ENCODE measurements at regions of chr12 and their contacts with region 1.

Region 1: DNA sequence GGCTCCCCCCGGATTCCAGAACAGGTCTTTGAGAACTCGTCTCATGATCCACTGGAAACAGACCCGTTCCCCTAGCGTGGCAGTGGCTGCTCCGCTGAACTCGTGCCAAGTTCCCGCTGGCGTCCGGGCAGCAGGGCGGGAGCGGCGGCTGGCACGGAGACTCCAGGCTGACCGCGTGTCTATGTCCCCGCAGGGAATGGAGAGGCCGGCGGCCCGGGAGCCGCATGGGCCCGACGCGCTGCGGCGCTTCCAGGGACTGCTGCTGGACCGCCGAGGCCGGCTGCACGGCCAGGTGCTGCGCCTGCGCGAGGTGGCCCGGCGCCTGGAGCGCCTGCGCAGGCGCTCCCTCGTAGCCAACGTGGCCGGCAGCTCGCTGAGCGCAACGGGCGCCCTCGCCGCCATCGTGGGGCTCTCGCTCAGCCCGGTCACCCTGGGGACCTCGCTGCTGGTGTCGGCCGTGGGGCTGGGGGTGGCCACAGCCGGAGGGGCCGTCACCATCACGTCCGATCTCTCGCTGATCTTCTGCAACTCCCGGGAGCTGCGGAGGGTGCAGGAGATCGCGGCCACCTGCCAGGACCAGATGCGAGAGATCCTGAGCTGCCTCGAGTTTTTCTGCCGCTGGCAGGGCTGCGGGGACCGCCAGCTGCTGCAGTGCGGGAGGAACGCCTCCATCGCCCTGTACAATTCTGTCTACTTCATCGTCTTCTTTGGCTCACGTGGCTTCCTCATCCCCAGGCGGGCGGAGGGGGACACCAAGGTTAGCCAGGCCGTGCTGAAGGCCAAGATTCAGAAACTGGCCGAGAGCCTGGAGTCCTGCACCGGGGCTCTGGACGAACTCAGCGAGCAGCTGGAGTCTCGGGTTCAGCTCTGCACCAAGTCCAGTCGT is 1.5 kb downstream of the APOLD1 start:
- DNase-seq: peak; percentile 73
- ATAC-seq: peak; percentile 92
- H3K4me3 Mint-ChIP-seq: peak overlapping the region; percentile 87
- H3K27ac Mint-ChIP-seq: peak overlapping the region; percentile 86
- H3K4me1 Mint-ChIP-seq: peaks cover 23% of the 10 kb centered on the region
- H3K27me3 Mint-ChIP-seq: no peaks in the 10 kb centered on the region
- CTCF ChIP-seq: no peak

Region 2: DNA sequence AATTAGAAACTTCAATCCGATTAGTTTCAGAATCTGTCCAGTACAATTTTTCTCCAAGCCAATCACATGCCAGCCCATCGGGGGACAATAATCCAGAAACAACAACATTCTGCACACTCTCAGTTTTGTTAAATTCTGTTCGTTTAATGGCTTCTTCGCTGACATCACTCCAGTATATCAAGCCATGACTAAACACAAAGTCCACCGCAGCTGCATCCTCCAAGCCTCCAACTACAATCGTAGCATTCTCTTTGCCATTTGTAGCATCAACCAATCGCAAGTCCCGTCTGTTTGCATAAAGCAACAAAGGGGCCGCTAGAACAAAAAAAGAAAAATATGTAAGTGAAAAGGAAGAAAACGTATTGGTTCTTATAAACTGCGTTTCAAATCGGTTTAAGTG is 542.6 kb before region 1 on chr12:
- CTCF ChIA-PET with region 1: no interaction called
- POLR2A ChIA-PET with region 1: no interaction called
- intact Hi-C with region 1: no loop called
- DNase-seq: no peak
- ATAC-seq: no peak
- H3K4me3 Mint-ChIP-seq: no peak overlapping the region
- H3K27ac Mint-ChIP-seq: no peak overlapping the region
- H3K4me1 Mint-ChIP-seq: no peaks in the 10 kb centered on the region
- H3K27me3 Mint-ChIP-seq: no peaks in the 10 kb centered on the region
- CTCF ChIP-seq: no peak

Region 3: GRCh38 chr12:12376646-12377448 is 410.1 kb before region 1 on chr12:
- CTCF ChIA-PET with region 1: interaction called, 3 read pairs
- POLR2A ChIA-PET with region 1: no interaction called
- intact Hi-C with region 1: loop called (anchors 2 kb)
- DNase-seq: no peak
- ATAC-seq: peak; percentile 83
- H3K4me3 Mint-ChIP-seq: no peak overlapping the region
- H3K27ac Mint-ChIP-seq: no peak overlapping the region
- H3K4me1 Mint-ChIP-seq: peaks cover 19% of the 10 kb centered on the region
- H3K27me3 Mint-ChIP-seq: no peaks in the 10 kb centered on the region
- CTCF ChIP-seq: no peak

Region 4: GRCh38 chr12:12803186-12803585 is 16.2 kb after region 1 on chr12:
- CTCF ChIA-PET with region 1: interaction called, 30 read pairs
- POLR2A ChIA-PET with region 1: interaction called, 20 read pairs
- intact Hi-C with region 1: loop called (anchors 1 kb)
- DNase-seq: no peak
- ATAC-seq: peak; percentile 70
- H3K4me3 Mint-ChIP-seq: peak overlapping the region; percentile 12
- H3K27ac Mint-ChIP-seq: peak overlapping the region; percentile 6
- H3K4me1 Mint-ChIP-seq: peaks cover 65% of the 10 kb centered on the region
- H3K27me3 Mint-ChIP-seq: no peaks in the 10 kb centered on the region
- CTCF ChIP-seq: no peak

Region 5: DNA sequence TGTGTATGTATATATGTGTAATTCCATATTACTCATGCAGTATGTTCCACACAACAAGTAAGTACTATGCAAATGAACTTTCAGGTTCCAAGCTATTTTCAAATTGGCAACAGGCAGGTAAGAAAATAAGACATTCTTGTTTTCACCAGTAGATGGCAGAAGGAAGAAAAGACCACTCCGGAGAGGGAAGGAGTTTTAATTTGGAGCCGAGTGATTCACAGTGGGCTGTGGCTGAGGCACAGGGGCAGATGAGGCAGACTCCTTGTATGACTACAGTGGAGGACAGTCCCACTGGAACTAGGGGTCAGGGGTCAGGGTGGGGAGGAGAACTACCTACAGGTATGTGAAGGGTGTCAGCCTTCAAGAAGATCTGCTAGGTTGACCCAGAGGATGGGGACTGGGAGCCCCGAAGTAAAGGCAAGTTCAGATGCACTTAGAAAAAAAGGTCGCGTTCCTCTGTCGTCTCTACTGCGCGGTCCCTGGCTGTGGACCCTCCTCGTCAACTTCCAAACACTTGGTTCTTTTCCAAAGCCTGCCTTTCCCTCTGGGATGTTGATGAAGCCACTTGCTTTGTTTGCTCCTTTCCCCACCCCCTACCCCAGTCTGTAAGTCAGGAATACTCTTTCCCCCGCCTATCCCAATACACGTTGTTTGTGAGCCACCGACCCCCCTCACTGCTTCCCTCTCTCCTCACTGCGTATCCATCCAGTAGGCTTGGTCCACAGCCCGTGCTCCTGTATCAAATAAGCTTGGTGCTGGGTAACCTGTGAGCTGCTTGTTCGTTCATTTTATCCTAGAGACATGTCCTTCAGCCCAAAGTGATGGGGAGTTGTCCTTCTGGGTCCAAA is 50.3 kb after region 1 on chr12:
- CTCF ChIA-PET with region 1: interaction called, 14 read pairs
- POLR2A ChIA-PET with region 1: no interaction called
- intact Hi-C with region 1: no loop called
- DNase-seq: no peak
- ATAC-seq: peak; percentile 65
- H3K4me3 Mint-ChIP-seq: no peak overlapping the region
- H3K27ac Mint-ChIP-seq: no peak overlapping the region
- H3K4me1 Mint-ChIP-seq: peaks cover 4% of the 10 kb centered on the region
- H3K27me3 Mint-ChIP-seq: no peaks in the 10 kb centered on the region
- CTCF ChIP-seq: no peak

Region 6: DNA sequence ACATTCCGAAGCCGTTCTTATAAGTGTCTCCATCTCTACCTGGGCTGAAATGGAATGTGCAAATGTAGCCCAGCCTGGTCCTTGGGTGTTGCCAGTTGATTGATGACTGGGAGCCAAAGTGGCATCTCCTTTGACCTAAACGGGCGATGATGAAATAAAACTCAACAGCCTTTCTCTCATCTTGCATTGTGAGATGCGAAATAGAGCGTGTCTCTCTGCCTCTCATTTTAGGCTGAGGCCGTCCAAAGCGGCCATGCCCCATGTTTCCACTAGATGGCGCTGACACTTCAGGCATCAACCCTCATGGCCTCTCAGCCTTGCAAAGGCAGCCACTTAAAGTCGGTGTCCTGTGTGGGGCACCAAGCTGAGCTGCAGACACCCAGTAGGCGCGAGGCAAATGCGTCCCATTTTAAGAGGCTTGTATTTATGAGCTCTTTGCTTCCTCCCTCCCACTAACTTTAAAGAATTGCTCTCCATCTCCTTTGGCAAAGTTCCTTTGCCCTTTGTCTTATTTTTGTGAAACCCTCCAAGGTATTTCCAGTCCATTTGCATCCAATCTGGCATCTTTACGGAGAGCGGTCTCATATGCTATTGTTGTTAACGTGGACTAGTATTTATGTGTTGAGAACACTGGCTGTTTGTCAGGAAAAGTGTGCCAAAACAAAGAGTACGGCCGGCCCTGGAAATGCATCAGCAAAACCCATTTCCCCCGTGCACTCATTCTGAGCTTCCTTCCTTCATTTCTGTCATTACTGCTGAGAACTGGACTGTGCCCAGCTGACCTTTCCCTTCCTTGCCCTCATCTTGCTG is 129.4 kb after region 1 on chr12:
- CTCF ChIA-PET with region 1: interaction called, 13 read pairs
- POLR2A ChIA-PET with region 1: no interaction called
- intact Hi-C with region 1: loop called (anchors 1 kb)
- DNase-seq: peak; percentile 73
- ATAC-seq: peak; percentile 99
- H3K4me3 Mint-ChIP-seq: no peak overlapping the region
- H3K27ac Mint-ChIP-seq: no peak overlapping the region
- H3K4me1 Mint-ChIP-seq: peaks cover 8% of the 10 kb centered on the region
- H3K27me3 Mint-ChIP-seq: peaks cover 16% of the 10 kb centered on the region
- CTCF ChIP-seq: peak; percentile 86

Region 7: GRCh38 chr12:13211859-13212664 is 425.1 kb after region 1 on chr12:
- CTCF ChIA-PET with region 1: interaction called, 21 read pairs
- POLR2A ChIA-PET with region 1: no interaction called
- intact Hi-C with region 1: loop called (anchors 1 kb)
- DNase-seq: peak; percentile 31
- ATAC-seq: peak; percentile 77
- H3K4me3 Mint-ChIP-seq: no peak overlapping the region
- H3K27ac Mint-ChIP-seq: no peak overlapping the region
- H3K4me1 Mint-ChIP-seq: peaks cover 4% of the 10 kb centered on the region
- H3K27me3 Mint-ChIP-seq: peaks cover 18% of the 10 kb centered on the region
- CTCF ChIP-seq: no peak